Activated T-helper 1 cell treated with anti-CD3 and anti-CD28 coated beads, Interleukin-12 subunit alpha, Interleukin-12 subunit beta, Interleukin-2, Interleukin-4 antibody, amounts not matched to agents 30 ng/mL and 10 ng/mL and 1 ng/mL, durations not matched to agents 14 hours and 24 hours and 36 hours (primary cell): ENCODE measurements at regions of chr10 and their contacts with region 1.

Region 1: DNA sequence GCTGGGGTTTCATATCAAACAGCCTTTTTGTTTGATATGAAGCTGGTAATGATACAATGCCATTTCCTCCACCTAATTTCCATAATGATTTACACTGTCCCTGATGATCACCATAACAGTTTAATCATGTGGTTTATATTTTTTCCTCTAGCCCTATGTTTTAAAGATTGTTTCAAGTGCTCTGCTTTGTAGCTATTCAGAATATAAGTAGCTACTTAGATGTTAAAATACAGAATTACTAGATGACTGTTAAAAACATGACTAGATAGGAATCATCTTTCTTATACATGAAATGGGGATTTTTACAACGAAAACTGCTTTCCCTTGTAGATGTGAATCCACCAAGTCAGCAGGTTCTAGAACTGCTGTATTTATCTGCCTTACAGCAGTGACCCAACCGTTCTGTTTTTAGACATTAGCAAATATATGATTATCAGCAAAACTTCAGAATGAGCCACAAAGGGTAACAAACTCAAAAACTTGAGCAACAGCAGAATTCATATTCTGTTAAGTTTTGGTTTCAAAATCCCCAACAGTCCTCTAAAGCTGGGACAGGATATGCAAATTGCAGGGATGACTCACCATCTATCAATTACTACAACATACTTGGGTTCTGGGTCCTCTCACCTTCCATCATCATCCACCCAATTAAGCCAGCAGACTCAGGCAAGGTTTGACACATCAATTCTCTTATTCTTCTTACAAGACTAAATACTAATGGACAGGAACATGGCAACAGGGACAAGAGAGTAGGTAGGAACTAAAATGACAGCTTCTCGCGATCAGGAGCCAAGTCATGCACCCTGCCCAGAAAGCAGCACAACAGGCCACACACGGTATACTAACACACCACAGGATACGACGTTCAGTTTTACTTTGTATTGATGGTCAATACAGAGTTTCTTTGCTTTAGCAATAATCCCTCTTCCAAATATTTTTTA is 83.9 kb downstream of the PIP4K2A start:
- DNase-seq: no peak
- H3K4me3 Mint-ChIP-seq: peak overlapping the region; percentile 74
- H3K27ac Mint-ChIP-seq: peak overlapping the region; percentile 100
- H3K4me1 Mint-ChIP-seq: peaks cover 94% of the 10 kb centered on the region
- H3K27me3 Mint-ChIP-seq: no peaks in the 10 kb centered on the region

Region 2: DNA sequence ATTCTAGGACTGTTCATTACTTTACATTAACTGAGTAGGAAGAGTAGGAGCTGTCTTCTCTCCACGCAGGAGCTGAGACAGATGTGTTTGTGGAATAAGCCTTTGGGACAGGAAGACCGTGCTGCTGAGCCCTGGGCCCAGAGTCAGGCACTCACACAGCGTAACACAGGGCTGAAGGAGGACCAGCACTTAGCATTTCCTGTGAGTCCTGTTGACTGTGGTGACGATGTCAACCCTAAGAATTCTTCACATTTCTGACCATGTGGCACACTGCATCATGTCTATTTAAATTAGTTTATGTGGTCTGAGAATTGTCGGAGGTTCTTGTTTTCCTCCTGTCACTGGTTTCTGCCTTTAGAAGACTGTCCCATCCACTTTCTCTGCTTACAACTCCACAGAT is 33.4 kb before region 1 on chr10:
- intact Hi-C with region 1: loop called (anchors 1 kb)
- DNase-seq: no peak
- H3K4me3 Mint-ChIP-seq: no peak overlapping the region
- H3K27ac Mint-ChIP-seq: peak overlapping the region; percentile 45
- H3K4me1 Mint-ChIP-seq: peaks cover 55% of the 10 kb centered on the region
- H3K27me3 Mint-ChIP-seq: no peaks in the 10 kb centered on the region

Region 3: GRCh38 chr10:22618081-22618785 is 12.3 kb before region 1 on chr10:
- intact Hi-C with region 1: loop called (anchors 1 kb)
- DNase-seq: no peak
- H3K4me3 Mint-ChIP-seq: no peak overlapping the region
- H3K27ac Mint-ChIP-seq: peak overlapping the region; percentile 21
- H3K4me1 Mint-ChIP-seq: peaks cover 76% of the 10 kb centered on the region
- H3K27me3 Mint-ChIP-seq: no peaks in the 10 kb centered on the region

Region 4: DNA sequence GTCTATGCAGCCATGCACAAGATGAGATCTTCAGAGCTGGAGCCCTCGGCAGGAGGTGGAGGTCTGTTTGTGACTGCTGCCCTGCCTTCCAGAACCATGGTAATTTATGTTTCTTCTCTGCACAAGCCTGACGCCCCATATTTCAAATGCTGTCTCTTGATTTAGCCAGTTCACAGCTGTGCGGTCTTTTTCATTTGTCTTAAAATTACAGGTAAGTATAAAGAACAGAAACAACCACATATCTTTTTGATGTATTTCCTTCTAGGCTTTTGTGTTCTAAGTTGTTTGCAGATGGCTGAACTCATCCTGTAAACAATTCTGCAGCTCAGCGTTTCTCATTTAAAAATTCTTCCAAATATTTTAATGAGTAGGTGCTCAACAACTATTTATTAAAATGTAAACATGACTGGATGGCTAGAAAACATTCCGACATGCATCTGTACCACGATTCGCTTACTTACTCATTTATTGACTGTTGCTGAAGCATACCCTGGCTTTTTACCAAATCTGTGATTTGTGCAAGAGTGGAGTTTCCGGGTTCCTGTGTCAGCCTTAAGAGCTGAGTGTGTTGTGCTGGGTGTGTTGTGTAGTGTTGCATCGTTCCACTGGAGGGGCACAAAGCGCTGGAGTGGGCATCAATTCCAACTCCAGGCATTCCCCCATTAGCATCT is 24.9 kb after region 1 on chr10:
- intact Hi-C with region 1: loop called (anchors 1 kb)
- DNase-seq: no peak
- H3K4me3 Mint-ChIP-seq: peak overlapping the region; percentile 72
- H3K27ac Mint-ChIP-seq: peak overlapping the region; percentile 94
- H3K4me1 Mint-ChIP-seq: peaks cover 95% of the 10 kb centered on the region
- H3K27me3 Mint-ChIP-seq: no peaks in the 10 kb centered on the region

Region 5: GRCh38 chr10:22666287-22667092 is 36.0 kb after region 1 on chr10:
- intact Hi-C with region 1: no loop called
- DNase-seq: peak; percentile 57
- H3K4me3 Mint-ChIP-seq: peak overlapping the region; percentile 74
- H3K27ac Mint-ChIP-seq: peak overlapping the region; percentile 85
- H3K4me1 Mint-ChIP-seq: peaks cover 66% of the 10 kb centered on the region
- H3K27me3 Mint-ChIP-seq: no peaks in the 10 kb centered on the region

Region 6: DNA sequence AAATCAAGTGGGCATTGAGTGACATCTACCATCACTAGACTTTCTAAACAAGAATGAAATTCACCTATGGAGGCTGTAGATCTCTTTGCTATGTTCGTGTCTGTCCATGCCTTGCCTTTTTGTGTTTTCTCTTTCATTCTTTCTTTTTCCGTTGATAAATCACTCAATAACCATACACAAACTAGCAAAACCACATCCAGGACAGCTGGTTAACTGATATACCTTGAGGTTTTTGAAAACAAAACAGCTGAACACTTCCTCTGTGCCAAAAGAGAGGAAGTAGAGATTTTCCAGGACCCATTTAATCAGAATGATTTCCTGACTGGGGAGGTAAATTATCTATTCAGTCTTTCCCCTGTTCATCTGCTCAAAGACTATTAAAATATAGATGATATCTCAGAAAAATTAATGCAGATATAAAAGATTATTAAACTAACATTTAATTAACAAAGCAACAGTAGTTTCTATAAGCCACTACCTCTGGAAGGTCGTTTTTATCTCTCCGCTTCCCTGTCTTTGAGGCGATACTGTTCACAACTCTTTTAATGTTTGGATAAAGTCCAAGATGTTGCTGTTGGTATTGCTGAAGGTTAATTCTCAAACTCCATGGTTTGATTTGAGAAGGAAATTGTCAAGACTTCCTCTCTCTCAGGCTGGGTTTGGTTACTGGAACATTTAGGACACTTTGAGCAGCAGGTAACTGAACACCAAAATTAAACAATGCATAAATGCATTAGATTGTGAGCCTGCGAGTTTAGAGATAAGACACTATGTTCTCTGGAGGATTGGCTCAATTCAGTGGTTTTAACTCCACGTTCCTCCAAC is 738.5 kb after region 1 on chr10:
- intact Hi-C with region 1: loop called (anchors 10 kb)
- DNase-seq: peak; percentile 42
- H3K4me3 Mint-ChIP-seq: peak overlapping the region; percentile 63
- H3K27ac Mint-ChIP-seq: peak overlapping the region; percentile 79
- H3K4me1 Mint-ChIP-seq: peaks cover 64% of the 10 kb centered on the region
- H3K27me3 Mint-ChIP-seq: peaks cover 2% of the 10 kb centered on the region